ENCODE measurements at regions of chr6 and their contacts with region 1.

Region 1: DNA sequence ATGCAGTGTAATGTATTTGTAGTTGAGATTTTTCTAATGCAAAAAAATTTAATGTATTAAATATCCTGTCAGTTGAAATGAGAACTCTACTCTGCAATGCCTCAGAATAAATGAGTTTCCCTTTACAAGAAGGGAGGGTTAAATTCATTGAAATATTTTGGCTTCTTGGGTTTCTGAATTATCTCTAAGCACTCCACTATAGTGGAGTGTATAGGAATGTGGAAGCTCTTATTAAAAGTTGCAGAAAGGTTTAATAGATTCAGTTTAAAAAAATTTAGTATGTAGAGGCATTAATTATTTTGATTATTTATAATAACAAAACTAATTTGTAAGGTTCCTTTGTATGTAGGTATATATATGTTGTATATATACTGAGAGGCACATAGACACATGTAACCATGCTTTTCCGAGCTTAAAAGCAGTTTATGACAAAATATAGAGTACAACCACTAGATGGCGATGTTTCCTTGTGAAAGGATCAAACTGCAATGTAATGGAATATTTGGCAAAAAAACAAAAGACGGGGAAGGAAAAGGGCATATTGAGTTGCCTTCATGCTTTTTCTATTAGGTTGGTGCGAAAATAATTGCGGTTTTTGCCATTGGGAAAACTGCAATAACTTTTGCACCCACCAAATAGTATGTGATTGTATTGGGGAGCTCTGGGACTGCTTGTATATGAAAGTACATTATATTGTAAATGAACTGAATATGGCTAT is 144.2 kb downstream of the MYO6 start:
- DNase-seq: peak; percentile 63
- ATAC-seq: peak; percentile 81
- H3K4me3 ChIP-seq: no peak overlapping the region
- H3K27ac ChIP-seq: no peak overlapping the region
- H3K4me1 ChIP-seq: no peaks in the 10 kb centered on the region
- H3K27me3 ChIP-seq: no peaks in the 10 kb centered on the region
- CTCF ChIP-seq: peak; percentile 21 to 79 (median 52); a peak in 5 of 6 replicates
- POLR2A ChIP-seq: no peak
- RAD21 ChIP-seq: peak; percentile 62

Region 2: GRCh38 chr6:75747152-75747978 is 145.9 kb before region 1 on chr6:
- CTCF ChIA-PET with region 1: no interaction called
- POLR2A ChIA-PET with region 1: no interaction called
- RAD21 ChIA-PET with region 1: no interaction called
- intact Hi-C with region 1: no loop called
- DNase-seq: no peak
- ATAC-seq: no peak
- H3K4me3 ChIP-seq: peak overlapping the region in 1 of 2 experiments; percentile 89; a peak in 1 of 4 replicates
- H3K27ac ChIP-seq: peak overlapping the region; percentile 42; the same call in 1 of the 2 replicates
- H3K4me1 ChIP-seq: peaks cover 40 to 48% of the 10 kb centered on the region in 2 experiments
- H3K27me3 ChIP-seq: no peaks in the 10 kb centered on the region
- CTCF ChIP-seq: no peak
- POLR2A ChIP-seq: no peak
- RAD21 ChIP-seq: no peak

Region 3: DNA sequence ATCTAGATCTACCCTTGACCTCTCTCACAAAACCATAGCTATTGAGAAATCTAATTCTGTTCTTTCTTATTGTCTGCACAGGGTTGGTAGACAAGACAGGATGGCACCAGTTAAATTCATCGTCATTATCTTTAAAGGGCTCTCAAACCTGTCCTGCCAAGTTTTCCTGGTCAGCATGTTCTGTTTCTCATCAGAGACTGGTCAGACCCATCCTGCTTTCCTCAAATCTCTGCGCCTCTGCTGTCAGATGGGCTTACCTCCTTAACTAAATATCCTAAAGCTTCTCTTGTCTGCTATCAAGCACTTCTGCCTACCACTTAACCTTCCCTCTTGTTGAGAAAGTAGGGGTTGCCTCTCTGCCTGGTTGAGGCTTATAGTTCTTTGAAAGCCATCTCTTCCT is 19.0 kb before region 1 on chr6:
- CTCF ChIA-PET with region 1: interaction called, 58 read pairs
- POLR2A ChIA-PET with region 1: no interaction called
- RAD21 ChIA-PET with region 1: interaction called in 1 of 2 experiments, 3 read pairs
- intact Hi-C with region 1: no loop called
- DNase-seq: no peak
- ATAC-seq: no peak
- H3K4me3 ChIP-seq: no peak overlapping the region
- H3K27ac ChIP-seq: no peak overlapping the region
- H3K4me1 ChIP-seq: no peaks in the 10 kb centered on the region
- H3K27me3 ChIP-seq: no peaks in the 10 kb centered on the region
- CTCF ChIP-seq: no peak
- POLR2A ChIP-seq: no peak
- RAD21 ChIP-seq: no peak

Region 4: DNA sequence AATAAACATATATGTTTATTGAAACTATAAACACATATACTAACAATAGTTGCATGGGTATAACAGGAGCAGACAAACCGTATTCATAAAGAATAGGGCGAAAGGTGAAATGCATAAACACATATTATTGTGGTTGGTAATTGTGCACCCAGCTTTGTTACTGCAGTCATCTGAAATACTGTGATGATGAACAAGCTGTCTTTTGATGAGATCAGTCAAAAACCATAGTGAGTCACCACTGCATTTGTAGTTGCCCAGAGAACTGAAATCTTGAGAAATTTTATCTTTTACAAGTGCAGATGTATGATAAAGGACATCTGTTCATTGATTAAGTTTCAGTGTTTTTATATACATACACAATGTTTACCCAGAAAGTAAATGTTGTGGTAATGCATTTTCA is 10.5 kb before region 1 on chr6:
- CTCF ChIA-PET with region 1: interaction called, 58 read pairs
- POLR2A ChIA-PET with region 1: no interaction called
- RAD21 ChIA-PET with region 1: interaction called in 1 of 2 experiments, 3 read pairs
- intact Hi-C with region 1: no loop called
- DNase-seq: no peak
- ATAC-seq: no peak
- H3K4me3 ChIP-seq: no peak overlapping the region
- H3K27ac ChIP-seq: no peak overlapping the region
- H3K4me1 ChIP-seq: no peaks in the 10 kb centered on the region; a peak in 1 of 4 replicates
- H3K27me3 ChIP-seq: no peaks in the 10 kb centered on the region
- CTCF ChIP-seq: no peak
- POLR2A ChIP-seq: no peak
- RAD21 ChIP-seq: no peak

Region 5: GRCh38 chr6:75906871-75907270 is 13.7 kb after region 1 on chr6:
- CTCF ChIA-PET with region 1: interaction called, 33 read pairs
- POLR2A ChIA-PET with region 1: no interaction called
- RAD21 ChIA-PET with region 1: no interaction called
- intact Hi-C with region 1: no loop called
- DNase-seq: no peak
- ATAC-seq: no peak
- H3K4me3 ChIP-seq: no peak overlapping the region
- H3K27ac ChIP-seq: no peak overlapping the region
- H3K4me1 ChIP-seq: no peaks in the 10 kb centered on the region
- H3K27me3 ChIP-seq: no peaks in the 10 kb centered on the region
- CTCF ChIP-seq: no peak
- POLR2A ChIP-seq: no peak
- RAD21 ChIP-seq: no peak

Region 6: DNA sequence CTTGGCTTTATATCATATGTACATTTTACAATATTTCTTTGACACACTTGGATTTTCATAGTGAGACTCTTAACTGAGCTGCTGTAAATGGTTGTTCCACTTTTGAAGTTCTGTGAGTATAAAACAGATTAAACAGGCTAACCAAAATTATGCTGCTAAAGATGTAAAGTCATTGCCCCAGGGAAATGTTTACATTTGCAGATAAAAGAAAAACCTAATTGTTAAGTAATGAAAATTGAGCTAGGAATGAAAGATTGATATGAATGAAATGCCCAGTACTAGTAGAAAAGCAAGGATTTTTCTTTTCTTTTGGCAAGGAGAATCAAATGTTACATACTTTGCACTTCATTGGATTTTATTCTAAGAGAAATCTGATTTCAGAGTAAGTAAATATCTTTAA is 19.8 kb after region 1 on chr6:
- CTCF ChIA-PET with region 1: interaction called, 33 read pairs
- POLR2A ChIA-PET with region 1: no interaction called
- RAD21 ChIA-PET with region 1: no interaction called
- intact Hi-C with region 1: no loop called
- DNase-seq: no peak
- ATAC-seq: no peak
- H3K4me3 ChIP-seq: no peak overlapping the region
- H3K27ac ChIP-seq: no peak overlapping the region
- H3K4me1 ChIP-seq: no peaks in the 10 kb centered on the region
- H3K27me3 ChIP-seq: no peaks in the 10 kb centered on the region
- CTCF ChIP-seq: no peak
- POLR2A ChIP-seq: no peak
- RAD21 ChIP-seq: no peak

Region 7: DNA sequence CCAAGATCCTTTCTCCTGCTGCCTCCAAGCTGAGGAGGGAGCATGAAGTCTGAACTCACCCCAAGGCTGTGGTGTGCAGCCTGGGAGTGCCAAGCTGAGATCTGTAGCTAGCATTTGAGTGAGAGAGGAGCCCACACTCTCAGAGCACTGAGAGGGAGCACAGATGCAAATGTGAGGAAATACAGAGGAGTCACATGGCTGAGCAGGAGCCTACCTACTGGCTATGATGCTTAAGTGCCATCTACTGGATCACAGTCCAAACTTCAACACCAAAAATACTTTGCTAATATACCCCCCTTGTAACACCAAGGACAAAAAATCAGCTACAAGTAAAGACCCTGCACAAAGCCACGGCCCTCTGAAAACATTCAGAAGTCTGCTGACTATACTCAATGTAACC is 273.7 kb after region 1 on chr6:
- CTCF ChIA-PET with region 1: interaction called, 16 read pairs
- POLR2A ChIA-PET with region 1: no interaction called
- RAD21 ChIA-PET with region 1: no interaction called
- intact Hi-C with region 1: loop called (anchors 2 kb)
- DNase-seq: no peak
- ATAC-seq: peak; percentile 72
- H3K4me3 ChIP-seq: no peak overlapping the region
- H3K27ac ChIP-seq: no peak overlapping the region
- H3K4me1 ChIP-seq: no peaks in the 10 kb centered on the region
- H3K27me3 ChIP-seq: no peaks in the 10 kb centered on the region
- CTCF ChIP-seq: peak in 2 of 3 experiments; percentile 11 to 17; a peak in 3 of 6 replicates
- POLR2A ChIP-seq: no peak
- RAD21 ChIP-seq: peak; percentile 55

Region 8: GRCh38 chr6:77457720-77458349 is 1564.6 kb after region 1 on chr6:
- CTCF ChIA-PET with region 1: no interaction called
- POLR2A ChIA-PET with region 1: no interaction called
- RAD21 ChIA-PET with region 1: no interaction called
- intact Hi-C with region 1: loop called (anchors 5 kb)
- DNase-seq: peak; percentile 84
- ATAC-seq: peak; percentile 89
- H3K4me3 ChIP-seq: no peak overlapping the region
- H3K27ac ChIP-seq: no peak overlapping the region
- H3K4me1 ChIP-seq: peaks cover 12 to 26% of the 10 kb centered on the region in 2 experiments
- H3K27me3 ChIP-seq: no peaks in the 10 kb centered on the region
- CTCF ChIP-seq: peak; percentile 61 to 71 (median 68); a peak in 5 of 6 replicates
- POLR2A ChIP-seq: no peak
- RAD21 ChIP-seq: peak; percentile 78